Activated B cell treated with CpG ODN at 0.5 μM for 24 hours (primary cell): ENCODE measurements at regions of chr19 and their contacts with region 1.

Region 1: GRCh38 chr19:11380653-11381534 is 3.2 kb downstream of the EPOR start:
- DNase-seq: peak; percentile 91
- ATAC-seq: peak; percentile 85
- H3K4me3 Mint-ChIP-seq: peak overlapping the region; percentile 92
- H3K27ac Mint-ChIP-seq: peak overlapping the region; percentile 100
- H3K4me1 Mint-ChIP-seq: peaks cover 48% of the 10 kb centered on the region
- H3K27me3 Mint-ChIP-seq: no peaks in the 10 kb centered on the region
- CTCF ChIP-seq: no peak

Region 2: DNA sequence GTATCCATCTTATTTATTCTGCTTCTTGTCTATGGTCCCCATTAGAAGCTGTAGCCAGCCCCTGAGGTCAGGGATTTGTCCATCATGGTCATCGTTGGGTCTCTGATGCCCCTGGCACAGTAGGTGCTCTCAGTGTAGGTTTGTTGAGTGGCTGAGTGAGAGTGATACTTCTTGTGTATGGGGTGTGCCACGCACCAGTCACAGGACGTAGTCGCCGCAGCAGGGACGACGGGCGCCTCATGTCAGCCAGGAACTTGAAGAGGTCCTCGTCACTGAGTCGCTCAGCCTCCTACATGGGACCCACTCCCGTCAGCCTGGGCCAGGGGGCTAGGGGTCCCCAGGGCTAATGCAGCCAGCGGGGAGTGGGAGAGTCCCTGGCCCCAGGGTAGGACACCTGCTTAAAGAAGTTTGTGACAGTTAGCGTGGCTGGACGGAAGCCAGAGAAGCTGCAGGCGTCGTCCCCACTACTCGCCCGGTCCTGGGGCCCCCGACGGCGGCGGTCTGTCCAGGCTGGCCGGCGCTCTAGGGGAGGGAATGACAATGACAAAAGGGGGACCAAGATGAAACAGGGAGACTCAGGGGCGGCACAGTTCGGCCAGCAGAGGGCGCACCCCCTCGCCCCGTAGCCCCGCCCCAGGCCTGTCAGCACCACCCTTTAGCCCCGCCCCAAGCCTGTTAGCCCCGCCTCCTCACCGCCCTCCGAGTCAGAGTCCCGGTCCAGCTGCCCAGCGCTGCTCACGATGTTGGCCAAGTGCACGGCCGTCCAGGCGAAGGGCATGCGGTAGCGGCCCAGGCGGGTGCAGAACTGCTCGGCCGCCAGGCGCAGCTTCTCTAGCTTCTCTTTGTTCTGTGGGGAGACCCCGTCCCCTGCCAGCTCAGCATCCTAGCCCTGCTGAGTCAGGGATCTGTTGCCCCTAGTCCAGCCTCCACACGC is 137.8 kb before region 1 on chr19:
- CTCF ChIA-PET with region 1: interaction called, 4 read pairs
- POLR2A ChIA-PET with region 1: no interaction called
- intact Hi-C with region 1: loop called (anchors 1 kb)
- DNase-seq: peak; percentile 84
- ATAC-seq: peak; percentile 100
- H3K4me3 Mint-ChIP-seq: peak overlapping the region; percentile 15
- H3K27ac Mint-ChIP-seq: no peak overlapping the region
- H3K4me1 Mint-ChIP-seq: peaks cover 6% of the 10 kb centered on the region
- H3K27me3 Mint-ChIP-seq: peaks cover 2% of the 10 kb centered on the region
- CTCF ChIP-seq: peak; percentile 48

Region 3: DNA sequence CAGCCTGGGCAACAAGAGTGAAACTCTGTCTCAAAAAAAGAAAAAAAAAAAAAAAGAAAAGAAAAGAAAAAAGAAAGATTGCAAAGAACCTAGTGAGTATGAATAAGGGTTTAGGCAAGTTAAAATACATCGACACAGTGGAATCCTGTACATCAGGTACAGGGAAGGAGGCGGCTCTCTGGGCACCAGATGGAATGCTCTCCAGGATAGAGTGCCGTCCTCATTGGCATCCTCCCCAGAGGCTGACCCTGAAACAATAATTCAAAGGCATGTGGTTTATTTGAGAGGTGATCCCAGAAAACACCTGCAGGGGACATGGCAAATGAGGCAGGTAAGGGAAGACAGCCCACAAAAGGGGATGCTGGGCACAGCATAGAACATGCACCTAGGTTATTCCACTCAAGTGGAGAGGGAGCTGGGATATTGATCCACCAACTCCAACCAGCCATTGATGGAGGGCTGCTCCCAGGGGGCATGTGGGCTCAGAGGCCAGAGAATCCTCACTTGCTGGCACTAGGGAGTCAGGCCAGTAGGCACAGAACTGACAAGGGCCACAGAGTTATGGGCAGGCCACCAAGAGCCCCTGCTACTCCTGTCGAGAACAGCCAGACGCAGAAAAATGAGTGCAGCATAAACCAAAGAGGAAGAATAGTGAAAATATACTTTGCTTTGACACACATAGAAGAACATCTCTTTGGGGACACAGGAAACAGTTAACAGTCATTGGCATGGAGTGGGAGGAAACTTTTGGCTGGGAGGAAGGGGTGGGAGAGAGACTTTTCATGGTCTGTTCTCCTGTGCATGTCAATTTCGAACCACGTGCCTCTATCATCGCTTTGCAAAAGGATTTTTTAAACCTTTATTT is 80.7 kb before region 1 on chr19:
- CTCF ChIA-PET with region 1: no interaction called
- POLR2A ChIA-PET with region 1: no interaction called
- intact Hi-C with region 1: no loop called
- DNase-seq: no peak
- ATAC-seq: no peak
- H3K4me3 Mint-ChIP-seq: no peak overlapping the region
- H3K27ac Mint-ChIP-seq: no peak overlapping the region
- H3K4me1 Mint-ChIP-seq: no peaks in the 10 kb centered on the region
- H3K27me3 Mint-ChIP-seq: peaks cover 5% of the 10 kb centered on the region
- CTCF ChIP-seq: no peak

Region 4: GRCh38 chr19:11346092-11346940 is 34.6 kb before region 1 on chr19 and contains the starts of genes CCDC159 and TMEM205:
- CTCF ChIA-PET with region 1: interaction called, 3 read pairs
- POLR2A ChIA-PET with region 1: interaction called, 8 read pairs
- intact Hi-C with region 1: loop called (anchors 1 kb)
- DNase-seq: peak; percentile 93
- ATAC-seq: peak; percentile 95
- H3K4me3 Mint-ChIP-seq: peak within 1 kb of the TSS; percentile 98
- H3K27ac Mint-ChIP-seq: peak within 1 kb of the TSS; percentile 93
- H3K4me1 Mint-ChIP-seq: peaks cover 30% of the 10 kb centered on the region
- H3K27me3 Mint-ChIP-seq: no peaks in the 10 kb centered on the region
- CTCF ChIP-seq: no peak
- total RNA-seq, gene CCDC159: 27.6 and 32.1 TPM in 2 replicates
- total RNA-seq, gene TMEM205: 61.8 and 68.1 TPM in 2 replicates

Region 5: DNA sequence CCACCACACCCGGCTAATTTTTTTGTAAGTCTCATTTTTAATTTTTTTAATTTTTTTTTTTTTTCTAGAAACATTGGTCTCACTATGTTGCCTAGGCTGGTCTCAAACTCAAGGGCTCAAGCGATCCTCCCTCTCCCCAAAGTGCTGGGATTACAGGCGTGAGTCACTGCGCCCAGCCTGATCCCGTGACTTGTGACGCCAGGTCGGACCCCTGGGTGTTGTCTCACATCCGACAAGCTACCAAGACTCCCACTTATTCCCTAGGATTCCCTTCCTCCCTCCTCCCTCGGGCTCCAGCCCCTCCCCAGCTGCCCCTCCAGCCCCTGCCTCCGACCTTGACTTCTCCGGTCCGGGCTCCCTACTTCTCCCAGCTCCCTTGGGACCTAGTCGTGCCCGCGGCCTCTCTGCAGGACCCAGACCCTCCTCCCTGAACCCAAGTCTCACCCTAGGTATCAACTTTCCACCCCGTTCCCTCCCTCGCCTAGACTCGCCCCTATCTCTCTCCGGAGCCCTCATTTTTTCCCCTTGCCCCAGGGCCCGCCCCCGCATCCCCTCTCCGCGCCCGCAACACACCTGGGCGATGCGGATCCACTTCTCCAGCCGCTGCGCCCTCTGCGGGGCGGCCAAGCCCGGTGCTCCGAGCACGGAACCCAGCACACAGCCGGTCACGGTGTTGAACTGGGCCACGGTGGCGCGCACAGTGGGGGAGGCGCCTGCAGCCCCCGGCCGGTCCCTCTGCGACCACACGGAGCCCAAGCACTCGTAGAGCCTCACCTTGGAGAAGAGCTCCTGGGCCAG is 25.2 kb after region 1 on chr19:
- CTCF ChIA-PET with region 1: interaction called, 7 read pairs
- POLR2A ChIA-PET with region 1: interaction called, 3 read pairs
- intact Hi-C with region 1: loop called (anchors 1 kb)
- DNase-seq: peak; percentile 32
- ATAC-seq: peak; percentile 56
- H3K4me3 Mint-ChIP-seq: no peak overlapping the region
- H3K27ac Mint-ChIP-seq: no peak overlapping the region
- H3K4me1 Mint-ChIP-seq: peaks cover 5% of the 10 kb centered on the region
- H3K27me3 Mint-ChIP-seq: peaks cover 7% of the 10 kb centered on the region
- CTCF ChIP-seq: no peak

Region 6: DNA sequence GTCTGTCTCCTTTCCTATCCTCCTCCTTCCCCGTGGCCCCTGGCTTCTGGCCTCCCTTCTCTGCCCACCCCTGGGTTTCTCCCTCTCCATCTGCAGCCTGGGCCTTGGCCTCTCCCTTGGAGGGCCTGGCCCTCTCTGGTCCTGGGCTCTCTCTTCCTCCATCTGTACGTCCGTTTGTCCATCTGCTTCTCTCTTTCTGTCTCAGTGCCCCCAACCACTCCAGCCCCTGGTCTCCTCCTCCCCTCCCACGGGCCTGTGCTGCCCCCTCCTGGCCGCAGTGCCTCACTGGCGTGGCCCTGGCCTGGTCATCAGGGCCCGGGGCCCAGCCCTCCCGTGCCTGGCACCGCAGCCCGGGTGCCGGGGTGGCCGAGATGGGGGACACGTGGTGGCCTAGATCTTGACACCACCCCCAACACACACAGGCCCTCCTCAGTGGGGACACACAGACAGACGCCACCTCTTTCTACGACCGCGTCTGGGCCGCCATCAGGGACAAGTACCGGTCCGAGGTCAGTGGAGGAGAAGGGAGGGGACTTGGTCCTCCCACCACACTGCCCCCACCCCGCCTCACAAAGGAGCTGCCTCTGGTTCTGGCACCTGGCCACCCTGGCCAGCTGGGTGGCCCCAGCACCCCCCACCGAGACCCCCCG is 65.9 kb after region 1 on chr19:
- CTCF ChIA-PET with region 1: interaction called, 12 read pairs
- POLR2A ChIA-PET with region 1: no interaction called
- intact Hi-C with region 1: loop called (anchors 1 kb)
- DNase-seq: peak; percentile 61
- ATAC-seq: peak; percentile 81
- H3K4me3 Mint-ChIP-seq: no peak overlapping the region
- H3K27ac Mint-ChIP-seq: no peak overlapping the region
- H3K4me1 Mint-ChIP-seq: peaks cover 3% of the 10 kb centered on the region
- H3K27me3 Mint-ChIP-seq: no peaks in the 10 kb centered on the region
- CTCF ChIP-seq: no peak

Region 7: GRCh38 chr19:11505032-11505503 is 124.2 kb after region 1 on chr19:
- CTCF ChIA-PET with region 1: no interaction called
- POLR2A ChIA-PET with region 1: interaction called, 8 read pairs
- intact Hi-C with region 1: loop called (anchors 1 kb)
- DNase-seq: peak; percentile 97
- ATAC-seq: peak; percentile 93
- H3K4me3 Mint-ChIP-seq: peak overlapping the region; percentile 92
- H3K27ac Mint-ChIP-seq: peak overlapping the region; percentile 95
- H3K4me1 Mint-ChIP-seq: peaks cover 18% of the 10 kb centered on the region
- H3K27me3 Mint-ChIP-seq: no peaks in the 10 kb centered on the region
- CTCF ChIP-seq: no peak

Region 8: DNA sequence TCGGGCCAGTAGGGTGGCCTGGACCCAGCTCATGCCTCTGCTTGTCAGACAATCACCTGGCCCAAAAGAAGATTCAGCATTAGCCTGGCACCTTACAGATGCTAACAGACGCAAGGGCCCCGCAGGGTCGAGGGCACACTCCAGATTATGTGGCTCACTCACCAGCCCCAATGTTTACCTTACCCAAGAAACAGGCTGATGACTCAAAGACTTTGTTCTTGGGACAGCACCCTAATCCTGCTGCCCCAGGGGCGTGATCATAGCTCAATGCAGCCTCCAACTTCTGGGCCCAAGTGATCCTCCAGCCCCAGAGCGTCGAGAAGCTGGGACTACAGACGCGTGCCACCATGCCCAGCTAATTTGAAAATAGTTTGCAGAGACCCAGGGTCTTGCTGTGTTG is 138.2 kb after region 1 on chr19:
- CTCF ChIA-PET with region 1: no interaction called
- POLR2A ChIA-PET with region 1: no interaction called
- intact Hi-C with region 1: no loop called
- DNase-seq: no peak
- ATAC-seq: no peak
- H3K4me3 Mint-ChIP-seq: no peak overlapping the region
- H3K27ac Mint-ChIP-seq: no peak overlapping the region
- H3K4me1 Mint-ChIP-seq: no peaks in the 10 kb centered on the region
- H3K27me3 Mint-ChIP-seq: no peaks in the 10 kb centered on the region
- CTCF ChIP-seq: no peak